BJ (cell line): ENCODE measurements at regions of chr18 and their contacts with region 1.

Region 1: DNA sequence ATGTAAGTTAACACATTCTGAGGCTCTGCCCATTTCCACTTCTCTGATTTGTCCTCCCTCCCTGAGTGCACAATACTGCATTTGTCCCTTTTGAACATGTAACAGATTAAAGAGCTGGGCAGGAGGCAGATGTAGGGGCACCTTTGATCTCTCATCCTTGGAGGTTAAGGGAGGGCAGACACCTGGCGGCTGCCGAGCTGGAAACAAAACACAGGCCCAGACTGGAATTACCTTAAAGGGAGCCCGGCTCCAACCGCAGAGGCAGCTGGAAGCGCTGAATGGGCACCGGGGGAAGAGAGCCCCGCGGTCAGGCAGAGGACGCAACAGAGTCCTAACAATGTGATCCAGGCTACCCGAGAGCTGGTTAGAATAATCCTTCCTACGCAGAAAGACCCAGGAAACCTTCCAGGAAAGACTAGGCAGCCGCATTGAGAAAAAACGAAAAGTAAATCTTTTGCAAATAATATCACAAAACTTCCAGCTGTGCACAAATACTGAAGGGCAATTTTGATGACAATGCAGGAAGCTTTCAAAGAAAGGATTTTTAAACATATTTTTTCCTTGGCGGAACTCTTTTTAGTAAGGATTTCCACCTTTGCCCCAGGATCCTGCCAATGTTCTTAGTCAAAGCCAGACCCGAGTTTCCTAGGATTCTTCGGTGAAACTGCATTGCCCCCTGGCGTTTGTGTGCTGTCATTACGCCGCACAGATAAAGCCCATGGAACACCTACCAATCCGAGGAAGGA is 216.0 kb downstream of the TGIF1 start:
- DNase-seq: peak; percentile 33
- H3K4me3 ChIP-seq: no peak overlapping the region
- H3K27me3 ChIP-seq: no peaks in the 10 kb centered on the region
- CTCF ChIP-seq: peak; percentile 88

Region 2: GRCh38 chr18:3281456-3282400 is 384.2 kb before region 1 on chr18:
- CTCF ChIA-PET with region 1: interaction called, 82 read pairs
- POLR2A ChIA-PET with region 1: no interaction called
- DNase-seq: peak; percentile 60
- H3K4me3 ChIP-seq: no peak overlapping the region
- H3K27me3 ChIP-seq: no peaks in the 10 kb centered on the region
- CTCF ChIP-seq: peak; percentile 31; the same call in 1 of the 2 replicates

Region 3: GRCh38 chr18:3447895-3448837 is 217.8 kb before region 1 on chr18:
- CTCF ChIA-PET with region 1: interaction called, 11 read pairs
- POLR2A ChIA-PET with region 1: interaction called, 3 read pairs
- DNase-seq: peak; percentile 92
- H3K4me3 ChIP-seq: peak overlapping the region; percentile 96
- H3K27me3 ChIP-seq: no peaks in the 10 kb centered on the region
- CTCF ChIP-seq: 0 out of 2 replicates have a peak, but pooled peaks have one; percentile 13

Region 4: DNA sequence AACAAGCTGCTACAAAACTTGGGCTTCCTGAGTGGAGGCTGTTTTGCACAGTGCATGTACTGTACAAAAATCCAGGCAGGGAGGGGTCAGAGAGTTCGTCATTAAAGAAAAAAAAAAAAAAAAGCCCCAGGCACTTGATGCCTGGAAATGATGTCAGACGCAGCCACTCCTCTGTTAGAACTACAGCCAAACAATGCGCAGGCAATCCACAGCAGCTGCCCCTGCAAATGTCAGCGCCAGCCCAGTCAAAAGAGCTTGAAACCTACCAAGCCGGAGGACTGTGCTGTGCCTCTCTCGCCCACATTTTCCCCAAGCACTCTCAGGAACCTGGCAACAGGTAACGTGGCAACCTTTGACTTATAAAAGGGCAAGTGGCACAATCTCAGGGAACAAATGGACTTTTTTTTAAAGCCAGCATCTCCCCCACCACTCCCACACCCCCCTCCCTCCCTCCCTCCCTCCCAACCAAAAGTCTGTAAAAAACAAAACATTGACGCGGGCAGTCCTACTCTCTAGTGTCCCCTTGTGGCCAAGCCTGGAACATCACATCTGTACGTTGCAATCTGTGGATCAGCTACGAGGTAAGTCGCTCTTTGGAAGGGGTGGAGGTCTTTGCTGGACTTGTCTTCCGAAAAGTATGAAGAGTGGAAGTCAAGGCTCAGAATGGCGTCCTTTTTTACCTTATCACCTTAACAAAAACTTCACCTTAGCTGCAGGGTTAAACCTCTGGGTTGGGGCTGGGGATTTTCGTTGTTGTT is 71.9 kb before region 1 on chr18:
- CTCF ChIA-PET with region 1: interaction called, 55 read pairs
- POLR2A ChIA-PET with region 1: interaction called, 11 read pairs
- DNase-seq: peak; percentile 90
- H3K4me3 ChIP-seq: peak overlapping the region; percentile 45
- H3K27me3 ChIP-seq: no peaks in the 10 kb centered on the region
- CTCF ChIP-seq: peak; percentile 92

Region 5: DNA sequence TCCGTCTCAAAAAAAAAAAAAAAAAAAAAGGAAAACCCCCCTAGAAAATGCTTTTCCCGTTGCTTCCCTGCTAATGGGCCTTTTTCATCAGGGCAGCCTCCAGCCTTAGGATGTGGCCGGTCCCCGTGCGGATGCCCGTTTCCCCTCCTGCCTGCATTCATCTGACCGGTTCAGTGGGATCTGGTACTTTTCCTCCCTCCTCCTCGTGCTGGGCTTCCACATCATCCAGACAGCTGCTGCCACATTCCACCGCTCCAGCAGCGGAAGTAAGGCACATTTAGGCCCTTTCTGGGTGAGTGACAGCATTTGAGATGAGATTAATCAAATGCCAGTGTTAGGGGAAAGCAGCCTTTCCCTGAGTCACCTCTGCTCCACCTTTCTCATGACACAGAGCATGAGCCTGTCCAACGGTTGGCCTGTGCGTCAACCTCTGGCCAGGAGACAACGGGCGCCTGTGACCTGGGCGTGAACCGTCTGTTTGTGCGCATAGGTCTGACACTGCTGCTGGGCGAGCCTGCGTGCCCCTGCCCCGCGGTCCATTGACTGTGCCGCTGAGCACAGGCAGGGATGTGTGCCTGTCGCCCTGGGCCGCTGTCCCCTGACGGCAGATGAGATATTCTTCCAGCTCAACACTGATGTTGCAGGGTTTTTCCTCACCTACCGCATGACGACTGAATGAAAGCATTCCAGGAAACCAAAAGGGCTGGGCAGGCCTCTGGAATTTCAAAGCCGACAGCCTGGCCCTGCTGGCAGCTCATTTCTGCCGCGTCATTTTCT is 42.0 kb before region 1 on chr18:
- CTCF ChIA-PET with region 1: interaction called, 11 read pairs
- POLR2A ChIA-PET with region 1: no interaction called
- DNase-seq: peak; percentile 91
- H3K4me3 ChIP-seq: peak overlapping the region; percentile 20; the same call in 1 of the 2 replicates
- H3K27me3 ChIP-seq: no peaks in the 10 kb centered on the region
- CTCF ChIP-seq: no peak

Region 6: GRCh38 chr18:3683483-3683882 is 17.5 kb after region 1 on chr18:
- CTCF ChIA-PET with region 1: interaction called, 17 read pairs
- POLR2A ChIA-PET with region 1: no interaction called
- DNase-seq: no peak
- H3K4me3 ChIP-seq: no peak overlapping the region
- H3K27me3 ChIP-seq: no peaks in the 10 kb centered on the region
- CTCF ChIP-seq: no peak